ENCODE measurements at regions of chr10 and their contacts with region 1.

Region 1: GRCh38 chr10:119859420-119860258 is 13.0 kb downstream of the MCMBP start:
- DNase-seq: peak; percentile 65
- ATAC-seq: peak; percentile 45
- H3K4me3 ChIP-seq: no peak overlapping the region
- H3K27ac ChIP-seq: 0 out of 2 replicates have a peak overlapping the region, but pooled peaks have one; percentile 0
- H3K4me1 ChIP-seq: peaks cover 10% of the 10 kb centered on the region; the same call in 1 of the 2 replicates
- H3K27me3 ChIP-seq: no peaks in the 10 kb centered on the region
- CTCF ChIP-seq: peak; percentile 72

Region 2: DNA sequence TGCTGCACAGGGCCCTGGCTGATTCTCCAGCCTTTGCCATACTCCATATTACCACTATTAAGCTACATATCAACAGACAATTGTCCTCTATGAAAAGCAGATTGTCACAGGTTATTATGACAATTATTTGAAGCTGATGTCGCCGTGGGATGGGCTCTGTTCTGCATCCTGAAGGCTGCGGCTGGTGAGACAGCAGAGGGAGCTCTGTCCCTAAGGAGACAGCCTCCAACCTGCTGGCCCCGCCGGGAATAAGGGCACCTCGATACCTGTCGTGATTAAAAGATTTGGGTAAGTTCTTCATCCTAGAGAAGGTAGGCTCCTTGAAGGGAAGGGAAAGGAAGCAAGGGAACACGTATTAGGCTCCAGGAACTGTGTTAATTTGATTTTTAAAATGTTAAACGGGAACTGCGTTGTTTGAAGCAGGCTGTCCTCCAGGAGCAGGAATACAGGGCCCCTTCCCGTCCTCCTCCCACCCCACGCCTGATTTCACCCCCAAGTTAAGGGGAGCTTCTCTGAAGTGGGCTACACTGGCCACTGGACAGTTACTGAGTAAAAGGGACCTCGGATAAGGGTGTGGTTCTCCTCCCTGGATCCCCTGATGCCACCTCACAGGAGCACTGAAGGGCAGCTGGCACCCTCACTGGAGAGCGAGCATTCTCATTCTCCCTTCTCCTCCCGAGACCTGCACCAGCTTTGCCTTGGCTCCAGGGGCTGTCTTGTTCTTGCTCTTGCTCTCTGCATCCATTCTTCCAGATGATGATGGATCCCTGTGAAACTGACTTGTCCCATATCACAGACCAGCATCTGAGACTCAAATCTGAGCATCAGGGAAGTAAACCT is 251.1 kb before region 1 on chr10:
- CTCF ChIA-PET with region 1: no interaction called
- POLR2A ChIA-PET with region 1: no interaction called
- intact Hi-C with region 1: loop called (anchors 1 kb)
- DNase-seq: peak; percentile 63
- ATAC-seq: peak; percentile 100
- H3K4me3 ChIP-seq: no peak overlapping the region
- H3K27ac ChIP-seq: no peak overlapping the region
- H3K4me1 ChIP-seq: peaks cover 5% of the 10 kb centered on the region; the same call in 1 of the 2 replicates
- H3K27me3 ChIP-seq: no peaks in the 10 kb centered on the region
- CTCF ChIP-seq: peak; percentile 90

Region 3: GRCh38 chr10:119750391-119751230 is 109.0 kb before region 1 on chr10:
- CTCF ChIA-PET with region 1: interaction called, 16 read pairs
- POLR2A ChIA-PET with region 1: no interaction called
- intact Hi-C with region 1: loop called (anchors 1 kb)
- DNase-seq: peak; percentile 70
- ATAC-seq: peak; percentile 81
- H3K4me3 ChIP-seq: no peak overlapping the region
- H3K27ac ChIP-seq: no peak overlapping the region
- H3K4me1 ChIP-seq: no peaks in the 10 kb centered on the region
- H3K27me3 ChIP-seq: no peaks in the 10 kb centered on the region
- CTCF ChIP-seq: peak; percentile 83

Region 4: GRCh38 chr10:119989966-119990365 is 130.3 kb after region 1 on chr10:
- CTCF ChIA-PET with region 1: no interaction called
- POLR2A ChIA-PET with region 1: no interaction called
- intact Hi-C with region 1: no loop called
- DNase-seq: no peak
- ATAC-seq: no peak
- H3K4me3 ChIP-seq: no peak overlapping the region
- H3K27ac ChIP-seq: no peak overlapping the region
- H3K4me1 ChIP-seq: no peaks in the 10 kb centered on the region
- H3K27me3 ChIP-seq: no peaks in the 10 kb centered on the region
- CTCF ChIP-seq: no peak

Measured in PC-3 (cell line).